Heart left ventricle (tissue), 16 donors: ENCODE measurements at regions of chr17 and their contacts with region 1.

Region 1: DNA sequence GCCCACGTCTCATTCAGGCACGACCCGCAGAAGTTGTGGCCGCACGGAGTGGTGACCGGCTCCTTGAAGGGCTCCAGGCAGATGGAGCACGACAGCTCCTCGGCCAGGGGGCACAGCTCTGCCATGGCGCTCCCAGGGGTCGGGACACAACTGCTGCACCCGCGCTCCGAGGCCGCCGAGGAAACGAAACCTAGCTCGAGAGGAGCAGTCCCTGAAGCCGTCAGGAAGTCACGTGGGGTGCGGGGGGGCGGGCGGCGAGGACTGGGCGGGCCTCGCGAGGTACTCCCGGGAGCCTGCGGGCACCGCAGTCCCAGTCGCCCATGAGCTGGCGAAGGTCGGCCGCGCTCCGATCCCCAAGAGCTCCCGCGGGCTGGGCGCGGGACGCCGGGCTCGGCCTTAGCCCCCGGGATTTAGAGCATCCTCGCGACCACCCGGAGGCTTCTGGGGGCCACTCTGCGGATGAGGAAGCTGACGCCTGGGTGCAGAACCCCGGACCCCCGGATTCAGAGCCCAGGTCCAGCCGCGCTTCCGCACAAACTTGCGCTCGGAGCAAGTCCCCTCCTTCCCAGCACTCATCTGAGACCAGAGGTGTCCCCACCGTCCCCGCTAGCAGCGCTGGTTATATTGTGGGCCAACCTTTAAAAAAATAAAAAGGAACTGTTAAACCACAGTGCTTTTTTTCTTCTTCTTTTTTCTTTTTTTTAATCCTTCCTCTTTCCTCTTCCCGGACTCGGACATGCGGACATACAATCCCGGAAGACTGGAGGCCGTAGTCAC is at the start of gene TRIM25:
- DNase-seq: peak; percentile 92 to 95 (median 94)
- ATAC-seq: peak; percentile 92 to 96 (median 95)
- H3K4me3 ChIP-seq: peak within 1 kb of the TSS; percentile 68 to 98 (median 81)
- H3K27ac ChIP-seq: peak within 1 kb of the TSS; percentile 66 to 97 (median 92)
- H3K4me1 ChIP-seq: peaks cover 0 to 60% (median 31%) of the 10 kb centered on the region in 12 donors
- H3K27me3 ChIP-seq: no peaks in the 10 kb centered on the region
- CTCF ChIP-seq: no peak
- POLR2A ChIP-seq: peak; percentile 64 to 98
- total RNA-seq, gene TRIM25: 12.8 to 55.9 (median 18.8) TPM

Region 2: GRCh38 chr17:56833809-56834379 is 80.2 kb before region 1 on chr17 and contains the starts of genes C17orf67 and DGKE:
- intact Hi-C with region 1: loop called in 5 of 10 experiments (anchors 5 kb)
- DNase-seq: peak; percentile 97 to 99 (median 99)
- ATAC-seq: peak; percentile 97 to 99 (median 99)
- H3K4me3 ChIP-seq: peak within 1 kb of the TSS; percentile 64 to 92 (median 78)
- H3K27ac ChIP-seq: peak within 1 kb of the TSS; percentile 80 to 96 (median 88)
- H3K4me1 ChIP-seq: peaks cover 0 to 40% (median 14%) of the 10 kb centered on the region in 12 donors
- H3K27me3 ChIP-seq: no peaks in the 10 kb centered on the region
- CTCF ChIP-seq: no peak
- POLR2A ChIP-seq: peak in 1 of 2 donors; percentile 67
- total RNA-seq, gene C17orf67: 0.25 to 1.1 (median 0.48) TPM
- total RNA-seq, gene DGKE: 1.9 to 4.1 (median 3.0) TPM